Endothelial cell of umbilical vein (primary cell): ENCODE measurements at regions of chr1 and their contacts with region 1.

Region 1: GRCh38 chr1:231603598-231604275 is 22.9 kb upstream of the DISC1 start:
- DNase-seq: peak; percentile 74
- H3K4me3 ChIP-seq: peak overlapping the region in 2 of 3 experiments; percentile 15 to 47
- H3K27ac ChIP-seq: no peak overlapping the region
- H3K4me1 ChIP-seq: peaks cover 8% of the 10 kb centered on the region
- H3K27me3 ChIP-seq: peaks cover 2 to 4% of the 10 kb centered on the region in 2 experiments
- CTCF ChIP-seq: peak; percentile 61 to 65
- POLR2A ChIP-seq: no peak

Region 2: GRCh38 chr1:230797942-230798418 is 805.8 kb before region 1 on chr1:
- CTCF ChIA-PET with region 1: no interaction called
- POLR2A ChIA-PET with region 1: no interaction called
- dilution Hi-C with region 1: no loop called
- intact Hi-C with region 1: loop called (anchors 5 kb)
- DNase-seq: peak; percentile 50
- H3K4me3 ChIP-seq: no peak overlapping the region
- H3K27ac ChIP-seq: no peak overlapping the region
- H3K4me1 ChIP-seq: no peaks in the 10 kb centered on the region
- H3K27me3 ChIP-seq: no peaks in the 10 kb centered on the region
- CTCF ChIP-seq: peak; percentile 39 to 65
- POLR2A ChIP-seq: no peak

Region 3: DNA sequence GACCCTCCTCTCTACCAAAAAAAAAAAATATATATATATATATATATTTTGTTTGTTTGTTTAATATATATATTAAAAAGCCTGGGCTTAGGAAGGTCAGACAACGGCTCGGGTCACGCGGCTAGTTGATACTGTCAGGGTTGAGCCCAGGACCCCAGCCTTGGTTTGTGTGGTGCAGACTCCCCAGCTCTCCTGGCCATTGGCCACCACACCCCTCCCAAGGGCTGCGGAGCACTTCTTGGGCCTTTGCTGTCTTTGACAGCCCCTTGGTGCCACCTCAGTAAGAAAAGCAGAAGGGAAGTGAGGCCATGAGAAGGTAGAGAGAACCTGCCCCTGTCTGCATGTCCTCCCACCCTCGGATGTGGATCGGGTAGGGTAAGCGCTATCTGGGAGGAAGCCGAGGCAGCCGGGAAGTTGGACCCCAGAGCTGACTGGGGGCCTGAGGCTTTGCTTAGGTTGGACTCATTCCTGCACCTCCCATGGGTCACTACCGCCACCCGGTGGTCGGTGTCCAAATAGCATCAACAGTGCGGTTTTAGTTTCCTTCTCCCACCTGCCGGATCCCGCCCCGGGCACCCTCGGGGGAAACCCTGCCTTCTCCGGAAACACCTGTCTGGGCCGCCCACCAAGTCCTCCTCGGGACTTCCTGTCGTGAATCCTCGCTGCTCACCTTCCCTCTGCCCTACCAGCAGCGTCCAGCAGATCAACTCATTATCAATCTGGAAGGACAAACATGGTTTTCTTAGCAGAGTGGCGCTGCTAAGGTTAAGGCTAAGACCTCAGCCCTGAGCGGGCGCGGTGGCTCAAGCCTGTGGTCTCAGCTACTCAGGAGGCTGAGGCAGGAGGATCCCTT is 392.5 kb before region 1 on chr1:
- CTCF ChIA-PET with region 1: no interaction called
- POLR2A ChIA-PET with region 1: no interaction called
- dilution Hi-C with region 1: no loop called
- intact Hi-C with region 1: loop called (anchors 2 kb)
- DNase-seq: peak; percentile 76
- H3K4me3 ChIP-seq: peak overlapping the region; percentile 6 to 52 (median 37)
- H3K27ac ChIP-seq: no peak overlapping the region
- H3K4me1 ChIP-seq: peaks cover 2% of the 10 kb centered on the region
- H3K27me3 ChIP-seq: peaks cover 0 to 5% of the 10 kb centered on the region in 2 experiments
- CTCF ChIP-seq: peak; percentile 84 to 90
- POLR2A ChIP-seq: no peak

Region 4: DNA sequence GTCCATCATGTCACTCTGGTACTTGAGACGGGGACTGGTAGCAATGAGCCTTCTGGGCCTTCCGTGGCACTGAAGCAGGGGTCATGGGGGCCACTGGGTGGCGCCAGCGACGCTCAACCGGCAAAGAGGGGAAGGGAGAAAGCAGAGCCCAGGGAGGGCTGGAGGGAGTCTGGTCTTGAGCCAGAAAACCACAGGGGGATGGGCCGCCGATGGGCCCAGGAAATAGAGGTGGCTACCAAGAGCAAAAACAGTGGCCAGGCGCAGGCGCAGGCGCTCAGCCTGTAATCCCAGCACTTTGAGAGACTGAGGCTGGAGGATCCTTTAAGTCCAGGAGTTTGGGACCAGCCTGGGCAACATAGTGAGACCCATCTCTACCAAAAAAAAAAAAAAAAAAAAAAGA is 287.9 kb before region 1 on chr1:
- CTCF ChIA-PET with region 1: interaction called, 8 read pairs
- POLR2A ChIA-PET with region 1: no interaction called
- dilution Hi-C with region 1: no loop called
- intact Hi-C with region 1: loop called (anchors 1 kb)
- DNase-seq: peak; percentile 59
- H3K4me3 ChIP-seq: no peak overlapping the region
- H3K27ac ChIP-seq: no peak overlapping the region
- H3K4me1 ChIP-seq: no peaks in the 10 kb centered on the region
- H3K27me3 ChIP-seq: no peaks in the 10 kb centered on the region
- CTCF ChIP-seq: peak; percentile 70 to 83
- POLR2A ChIP-seq: no peak

Region 5: GRCh38 chr1:231616667-231617066 is 12.9 kb after region 1 on chr1:
- CTCF ChIA-PET with region 1: interaction called, 15 read pairs
- POLR2A ChIA-PET with region 1: no interaction called
- dilution Hi-C with region 1: no loop called
- intact Hi-C with region 1: no loop called
- DNase-seq: no peak
- H3K4me3 ChIP-seq: no peak overlapping the region
- H3K27ac ChIP-seq: no peak overlapping the region
- H3K4me1 ChIP-seq: peaks cover 9% of the 10 kb centered on the region
- H3K27me3 ChIP-seq: peaks cover 17% of the 10 kb centered on the region in 2 experiments
- CTCF ChIP-seq: no peak
- POLR2A ChIP-seq: no peak

Region 6: DNA sequence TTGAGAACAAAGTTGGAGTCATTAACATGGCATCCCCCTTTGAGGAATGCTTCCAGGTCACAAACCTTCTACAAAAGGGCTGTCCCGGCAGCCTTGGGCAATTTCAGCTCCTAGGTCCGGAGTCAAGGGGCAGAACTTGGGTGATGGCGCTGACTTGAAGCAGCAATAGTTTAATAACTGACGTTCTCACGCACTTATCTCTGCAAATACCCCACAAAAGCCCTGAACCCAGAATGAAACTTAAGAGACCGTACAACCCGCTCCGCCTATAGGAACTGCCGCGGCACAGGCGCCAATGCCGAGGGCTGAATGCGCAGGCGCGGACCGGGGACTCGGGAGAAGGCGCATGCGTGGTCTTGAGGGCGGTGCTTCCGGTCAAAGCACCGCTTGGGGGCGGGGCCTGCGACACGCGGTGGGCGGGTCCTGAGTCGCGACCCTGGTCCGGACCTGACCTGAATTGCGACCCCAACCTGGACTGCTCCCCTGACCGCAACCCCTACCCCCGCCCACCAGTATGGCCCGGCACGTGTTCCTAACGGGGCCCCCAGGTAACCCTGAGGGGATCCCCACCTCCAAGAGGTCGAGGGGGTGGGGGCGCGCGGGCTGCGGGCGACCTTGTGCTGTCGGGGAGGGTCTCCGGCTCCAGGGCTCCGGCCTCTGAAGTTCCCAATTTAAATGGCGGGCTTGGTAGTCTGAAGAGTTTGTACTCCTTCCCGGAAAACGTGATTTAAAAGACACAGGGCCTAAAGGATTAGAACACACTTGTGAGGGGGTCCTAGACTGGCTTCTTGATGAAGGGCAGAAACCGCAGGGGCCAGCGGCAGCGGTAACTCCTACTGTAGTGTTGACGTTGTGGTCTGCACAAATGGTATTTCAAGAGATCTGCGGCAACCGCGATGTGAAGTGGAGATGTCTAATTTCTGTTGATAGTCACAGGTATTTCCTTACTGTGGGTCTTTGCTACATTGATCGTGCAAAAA is 1346.8 kb after region 1 on chr1 and contains the start of gene NTPCR:
- CTCF ChIA-PET with region 1: no interaction called
- POLR2A ChIA-PET with region 1: no interaction called
- dilution Hi-C with region 1: no loop called
- intact Hi-C with region 1: loop called (anchors 5 kb)
- DNase-seq: peak; percentile 96
- H3K4me3 ChIP-seq: peak within 1 kb of the TSS; percentile 48 to 85 (median 64)
- H3K27ac ChIP-seq: peak within 1 kb of the TSS; percentile 69
- H3K4me1 ChIP-seq: peaks cover 10% of the 10 kb centered on the region
- H3K27me3 ChIP-seq: no peaks in the 10 kb centered on the region
- CTCF ChIP-seq: peak in 1 of 2 donors; percentile 14
- POLR2A ChIP-seq: peak; percentile 85
- total RNA-seq, gene NTPCR: 30.3 and 35.3 TPM in 2 replicates